ENCODE measurements at regions of chr7 and their contacts with region 1.

Region 1: DNA sequence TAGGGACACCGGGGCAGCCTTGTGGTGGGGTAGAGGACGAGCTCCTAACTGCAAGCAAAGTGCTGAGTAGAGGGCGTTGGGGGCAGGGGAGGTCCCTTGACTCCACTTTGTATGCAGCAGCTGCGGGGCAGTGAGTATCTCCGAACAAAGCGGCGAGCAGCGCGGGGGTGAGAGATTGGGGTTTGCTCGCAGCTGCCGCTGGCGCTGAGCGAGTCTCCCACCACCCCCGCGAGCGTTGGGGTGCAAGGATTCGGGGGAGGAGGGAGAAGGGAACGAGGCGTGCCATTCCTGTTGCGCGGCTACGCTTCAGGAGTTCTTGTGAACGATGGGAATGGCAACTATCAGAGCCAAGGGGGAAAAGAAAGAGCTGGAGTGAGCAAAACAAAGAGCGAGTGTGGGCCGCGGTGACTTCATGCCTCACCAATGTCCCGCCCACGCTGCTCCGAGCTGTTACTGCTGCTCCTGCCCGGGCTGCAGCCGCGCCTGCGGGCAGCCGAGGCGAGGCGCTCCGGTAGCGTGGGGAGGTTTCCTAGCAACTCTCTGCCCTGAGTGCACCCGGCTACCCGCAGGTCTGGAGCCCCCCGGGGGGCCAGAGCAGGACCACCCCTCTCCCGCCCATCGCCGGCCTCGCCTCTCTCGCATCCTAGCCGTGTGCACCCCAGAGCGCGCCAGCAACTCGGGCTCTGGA is at the start of gene ITGB8:
- DNase-seq: no peak
- ATAC-seq: peak; percentile 70
- H3K4me3 ChIP-seq: peak within 1 kb of the TSS; percentile 83
- H3K27ac ChIP-seq: peak within 1 kb of the TSS; percentile 87
- H3K4me1 ChIP-seq: peaks cover 19% of the 10 kb centered on the region
- H3K27me3 ChIP-seq: no peaks in the 10 kb centered on the region; a peak in 1 of 4 replicates
- CTCF ChIP-seq: 0 out of 6 replicates have a peak, but pooled peaks of 1 of the 3 experiments have one; percentile 12
- EP300 ChIP-seq: no peak
- POLR2A ChIP-seq: no peak; the same call in none of the 2 replicates
- RAD21 ChIP-seq: 0 out of 2 replicates have a peak, but pooled peaks have one; percentile 13
- polyA plus RNA-seq, gene ITGB8: 0.37 to 0.40 TPM

Region 2: GRCh38 chr7:19713676-19714075 is 616.7 kb before region 1 on chr7:
- CTCF ChIA-PET with region 1: interaction called, 5 read pairs
- POLR2A ChIA-PET with region 1: no interaction called
- RAD21 ChIA-PET with region 1: interaction called, 15 read pairs
- SMC1A ChIA-PET with region 1: interaction called, 4 read pairs
- in situ Hi-C with region 1: no loop called
- intact Hi-C with region 1: loop called (anchors 5 kb)
- DNase-seq: peak; percentile 8
- ATAC-seq: peak; percentile 38
- H3K4me3 ChIP-seq: no peak overlapping the region
- H3K27ac ChIP-seq: no peak overlapping the region
- H3K4me1 ChIP-seq: no peaks in the 10 kb centered on the region
- H3K27me3 ChIP-seq: no peaks in the 10 kb centered on the region; a peak in 1 of 4 replicates
- CTCF ChIP-seq: peak; percentile 46 to 59 (median 49); a peak in 5 of 6 replicates
- EP300 ChIP-seq: no peak
- POLR2A ChIP-seq: no peak
- RAD21 ChIP-seq: peak; percentile 48; the same call in 1 of the 2 replicates

Region 3: GRCh38 chr7:20199015-20199737 is 131.2 kb before region 1 on chr7:
- CTCF ChIA-PET with region 1: interaction called, 4 read pairs
- POLR2A ChIA-PET with region 1: interaction called, 7 read pairs
- RAD21 ChIA-PET with region 1: interaction called, 10 read pairs
- SMC1A ChIA-PET with region 1: interaction called, 6 read pairs
- in situ Hi-C with region 1: no loop called
- intact Hi-C with region 1: no loop called
- DNase-seq: peak; percentile 94
- ATAC-seq: peak; percentile 77
- H3K4me3 ChIP-seq: no peak overlapping the region; the same call in 1 of the 2 replicates
- H3K27ac ChIP-seq: peak overlapping the region; percentile 3; the same call in 1 of the 2 replicates
- H3K4me1 ChIP-seq: peaks cover 25% of the 10 kb centered on the region
- H3K27me3 ChIP-seq: no peaks in the 10 kb centered on the region
- CTCF ChIP-seq: no peak
- EP300 ChIP-seq: peak in 1 of 2 experiments; percentile 32; a peak in 1 of 4 replicates
- POLR2A ChIP-seq: no peak
- RAD21 ChIP-seq: no peak

Region 4: GRCh38 chr7:20280475-20281351 is 49.7 kb before region 1 on chr7:
- CTCF ChIA-PET with region 1: no interaction called
- POLR2A ChIA-PET with region 1: interaction called, 3 read pairs
- RAD21 ChIA-PET with region 1: interaction called, 10 read pairs
- SMC1A ChIA-PET with region 1: interaction called, 5 read pairs
- in situ Hi-C with region 1: no loop called
- intact Hi-C with region 1: loop called (anchors 1 kb)
- DNase-seq: no peak
- ATAC-seq: peak; percentile 23
- H3K4me3 ChIP-seq: no peak overlapping the region
- H3K27ac ChIP-seq: no peak overlapping the region
- H3K4me1 ChIP-seq: peaks cover 11% of the 10 kb centered on the region; the same call in 1 of the 2 replicates
- H3K27me3 ChIP-seq: no peaks in the 10 kb centered on the region
- CTCF ChIP-seq: no peak
- EP300 ChIP-seq: no peak
- POLR2A ChIP-seq: no peak
- RAD21 ChIP-seq: no peak

Region 5: GRCh38 chr7:20316706-20317105 is 13.7 kb before region 1 on chr7:
- CTCF ChIA-PET with region 1: interaction called, 91 read pairs
- POLR2A ChIA-PET with region 1: interaction called, 11 read pairs
- RAD21 ChIA-PET with region 1: interaction called, 54 read pairs
- SMC1A ChIA-PET with region 1: interaction called, 129 read pairs
- in situ Hi-C with region 1: no loop called
- intact Hi-C with region 1: no loop called
- DNase-seq: no peak
- ATAC-seq: no peak
- H3K4me3 ChIP-seq: no peak overlapping the region
- H3K27ac ChIP-seq: no peak overlapping the region
- H3K4me1 ChIP-seq: no peaks in the 10 kb centered on the region
- H3K27me3 ChIP-seq: no peaks in the 10 kb centered on the region
- CTCF ChIP-seq: no peak
- EP300 ChIP-seq: no peak
- POLR2A ChIP-seq: no peak
- RAD21 ChIP-seq: no peak

Region 6: DNA sequence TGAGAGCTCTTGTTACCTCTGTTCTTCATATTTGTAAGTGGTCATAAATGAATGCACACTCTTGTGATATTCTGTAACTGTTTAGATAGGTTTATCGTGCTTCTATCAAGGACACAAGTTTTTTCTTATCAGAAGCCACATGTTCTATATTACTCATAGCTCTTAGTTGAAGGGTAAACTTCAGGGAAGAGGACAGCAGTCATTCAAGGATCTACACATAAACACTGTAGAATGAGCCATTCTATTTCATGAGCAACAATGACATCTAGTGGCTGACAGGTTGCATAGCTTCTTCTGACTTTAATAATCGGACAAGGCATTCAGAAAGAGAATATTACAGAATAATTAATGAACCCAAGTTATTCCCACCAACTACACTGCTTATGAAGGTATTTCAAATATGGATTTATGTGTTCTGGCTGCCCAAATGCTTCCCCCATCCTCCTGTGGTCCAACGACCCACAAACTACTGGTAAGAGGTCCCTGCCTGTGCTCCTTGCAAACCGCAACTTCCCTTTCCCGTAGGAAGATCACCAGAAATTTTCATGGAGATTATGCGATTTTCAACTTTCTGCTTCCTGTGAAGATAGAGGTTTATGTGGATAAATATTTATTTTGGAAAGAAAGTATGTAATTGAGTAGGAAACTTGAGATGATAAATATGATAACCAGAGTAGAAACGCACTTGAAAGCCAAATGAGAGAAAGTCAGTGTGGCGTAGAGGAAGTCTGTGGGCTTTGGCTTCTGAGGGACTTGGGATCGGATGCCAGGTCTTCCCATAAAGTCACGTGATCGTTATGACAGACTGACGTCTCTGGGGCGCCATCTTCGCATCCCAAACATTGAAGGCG is 268.3 kb after region 1 on chr7:
- CTCF ChIA-PET with region 1: interaction called, 52 read pairs
- POLR2A ChIA-PET with region 1: no interaction called
- RAD21 ChIA-PET with region 1: interaction called, 11 read pairs
- SMC1A ChIA-PET with region 1: interaction called, 29 read pairs
- in situ Hi-C with region 1: no loop called
- intact Hi-C with region 1: loop called (anchors 5 kb)
- DNase-seq: peak; percentile 43
- ATAC-seq: peak; percentile 88
- H3K4me3 ChIP-seq: no peak overlapping the region
- H3K27ac ChIP-seq: no peak overlapping the region
- H3K4me1 ChIP-seq: no peaks in the 10 kb centered on the region
- H3K27me3 ChIP-seq: no peaks in the 10 kb centered on the region
- CTCF ChIP-seq: peak; percentile 69 to 91 (median 84)
- EP300 ChIP-seq: no peak
- POLR2A ChIP-seq: no peak
- RAD21 ChIP-seq: peak; percentile 98

Measured in GM12878 (cell line).